HEK293T (cell line): ENCODE measurements at regions of chr12 and their contacts with region 1.

Region 1: GRCh38 chr12:26884765-26885576 is 52.0 kb upstream of the ITPR2 start:
- DNase-seq: peak; percentile 84

Region 2: GRCh38 chr12:26853303-26854030 is 31.5 kb before region 1 on chr12:
- CTCF ChIA-PET with region 1: interaction called, 10 read pairs
- POLR2A ChIA-PET with region 1: no interaction called
- DNase-seq: peak; percentile 68

Region 3: DNA sequence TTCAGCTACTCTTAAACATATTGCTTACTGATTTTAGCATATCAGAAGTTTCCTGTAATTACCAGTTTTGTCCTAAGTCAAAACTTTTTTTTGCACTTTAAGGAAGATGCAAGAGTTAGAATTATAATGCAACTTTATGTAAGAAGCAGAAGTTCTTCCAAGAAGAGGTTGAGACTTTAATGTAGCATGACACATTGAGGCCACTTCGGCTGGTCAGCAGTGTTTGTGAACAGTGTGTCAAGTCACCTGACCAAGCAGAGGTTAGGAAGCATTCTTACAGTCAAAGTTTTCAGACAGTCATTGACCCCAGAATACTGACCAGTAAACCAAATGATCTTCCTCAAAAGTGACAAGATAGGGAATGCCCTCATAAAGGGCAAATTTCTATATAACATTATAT is 68.5 kb after region 1 on chr12:
- CTCF ChIA-PET with region 1: no interaction called
- POLR2A ChIA-PET with region 1: no interaction called
- DNase-seq: no peak